ENCODE measurements at regions of chr6 and their contacts with region 1.

Region 1: GRCh38 chr6:47631269-47631772 is 67.1 kb upstream of the ADGRF4 start:
- DNase-seq: peak; percentile 72
- H3K4me3 ChIP-seq: no peak overlapping the region
- H3K27ac ChIP-seq: no peak overlapping the region
- H3K4me1 ChIP-seq: no peaks in the 10 kb centered on the region
- CTCF ChIP-seq: peak; percentile 86

Region 2: GRCh38 chr6:47376930-47377329 is 254.4 kb before region 1 on chr6:
- CTCF ChIA-PET with region 1: no interaction called
- POLR2A ChIA-PET with region 1: no interaction called
- intact Hi-C with region 1: no loop called
- DNase-seq: no peak
- H3K4me3 ChIP-seq: no peak overlapping the region
- H3K27ac ChIP-seq: no peak overlapping the region
- H3K4me1 ChIP-seq: peaks cover 17% of the 10 kb centered on the region
- CTCF ChIP-seq: no peak

Region 3: GRCh38 chr6:47733879-47734558 is 102.7 kb after region 1 on chr6:
- CTCF ChIA-PET with region 1: interaction called, 7 read pairs
- POLR2A ChIA-PET with region 1: interaction called, 3 read pairs
- intact Hi-C with region 1: loop called (anchors 1 kb)
- DNase-seq: peak; percentile 56
- H3K4me3 ChIP-seq: no peak overlapping the region
- H3K27ac ChIP-seq: no peak overlapping the region
- H3K4me1 ChIP-seq: no peaks in the 10 kb centered on the region
- CTCF ChIP-seq: peak; percentile 79

Region 4: GRCh38 chr6:47780510-47781356 is 149.4 kb after region 1 on chr6:
- CTCF ChIA-PET with region 1: no interaction called
- POLR2A ChIA-PET with region 1: no interaction called
- intact Hi-C with region 1: loop called (anchors 2 kb)
- DNase-seq: peak; percentile 67
- H3K4me3 ChIP-seq: no peak overlapping the region
- H3K27ac ChIP-seq: no peak overlapping the region
- H3K4me1 ChIP-seq: no peaks in the 10 kb centered on the region
- CTCF ChIP-seq: peak; percentile 91

Measured in OCI-LY7 (cell line).